SK-N-SH (cell line): ENCODE measurements at regions of chr1 and their contacts with region 1.

Region 1: GRCh38 chr1:241985787-241986186 is 13.1 kb downstream of the MAP1LC3C start:
- DNase-seq: peak; percentile 55
- H3K4me3 ChIP-seq: no peak overlapping the region
- H3K27ac ChIP-seq: no peak overlapping the region
- H3K4me1 ChIP-seq: peaks cover 0 to 4% of the 10 kb centered on the region in 2 experiments; a peak in 1 of 4 replicates
- H3K27me3 ChIP-seq: no peaks in the 10 kb centered on the region
- CTCF ChIP-seq: peak; percentile 66
- EP300 ChIP-seq: no peak
- RAD21 ChIP-seq: peak; percentile 62

Region 2: GRCh38 chr1:241782396-241782795 is 203.4 kb before region 1 on chr1:
- CTCF ChIA-PET with region 1: no interaction called
- POLR2A ChIA-PET with region 1: no interaction called
- DNase-seq: no peak
- H3K4me3 ChIP-seq: no peak overlapping the region
- H3K27ac ChIP-seq: no peak overlapping the region
- H3K4me1 ChIP-seq: no peaks in the 10 kb centered on the region
- H3K27me3 ChIP-seq: no peaks in the 10 kb centered on the region
- CTCF ChIP-seq: no peak
- EP300 ChIP-seq: no peak
- RAD21 ChIP-seq: no peak

Region 3: GRCh38 chr1:241870290-241870689 is 115.5 kb before region 1 on chr1:
- CTCF ChIA-PET with region 1: no interaction called
- POLR2A ChIA-PET with region 1: no interaction called
- DNase-seq: no peak
- H3K4me3 ChIP-seq: no peak overlapping the region
- H3K27ac ChIP-seq: no peak overlapping the region
- H3K4me1 ChIP-seq: no peaks in the 10 kb centered on the region; a peak in 1 of 4 replicates
- H3K27me3 ChIP-seq: no peaks in the 10 kb centered on the region
- CTCF ChIP-seq: no peak
- EP300 ChIP-seq: no peak
- RAD21 ChIP-seq: no peak

Region 4: DNA sequence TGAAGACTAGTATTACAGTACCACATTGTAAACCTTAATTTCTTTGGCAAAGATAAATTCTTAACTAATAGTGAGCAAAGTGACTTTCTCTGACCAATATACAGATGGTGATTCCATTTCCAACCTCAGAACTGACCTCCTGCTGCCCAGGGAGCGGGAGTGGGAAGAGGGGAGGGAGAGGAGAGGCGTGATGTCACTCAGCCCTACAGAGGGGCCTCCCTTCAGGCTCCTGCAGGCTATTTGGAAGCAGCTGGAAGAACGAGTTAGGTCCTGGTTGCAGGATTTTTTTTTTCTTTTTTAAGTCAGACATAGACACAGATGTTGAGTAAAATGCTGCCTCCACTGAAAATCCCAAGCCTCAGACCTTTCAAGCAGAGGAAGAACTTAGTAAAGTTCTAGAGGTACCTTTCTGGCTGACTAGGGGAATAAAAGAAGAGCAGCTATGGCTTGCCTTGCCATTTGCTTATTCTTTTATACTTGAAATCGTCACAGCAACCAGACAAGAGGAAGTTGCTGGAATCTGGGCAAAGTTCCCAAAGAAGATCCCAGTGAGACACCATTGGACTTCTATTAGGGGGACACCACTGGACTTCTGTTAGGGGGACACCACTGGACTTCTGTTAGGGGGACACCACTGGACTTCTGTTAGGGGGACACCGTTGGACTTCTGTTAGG is 83.3 kb before region 1 on chr1:
- CTCF ChIA-PET with region 1: interaction called, 53 read pairs
- POLR2A ChIA-PET with region 1: no interaction called
- DNase-seq: no peak
- H3K4me3 ChIP-seq: no peak overlapping the region
- H3K27ac ChIP-seq: no peak overlapping the region
- H3K4me1 ChIP-seq: no peaks in the 10 kb centered on the region; a peak in 1 of 4 replicates
- H3K27me3 ChIP-seq: no peaks in the 10 kb centered on the region
- CTCF ChIP-seq: no peak
- EP300 ChIP-seq: no peak
- RAD21 ChIP-seq: no peak

Region 5: DNA sequence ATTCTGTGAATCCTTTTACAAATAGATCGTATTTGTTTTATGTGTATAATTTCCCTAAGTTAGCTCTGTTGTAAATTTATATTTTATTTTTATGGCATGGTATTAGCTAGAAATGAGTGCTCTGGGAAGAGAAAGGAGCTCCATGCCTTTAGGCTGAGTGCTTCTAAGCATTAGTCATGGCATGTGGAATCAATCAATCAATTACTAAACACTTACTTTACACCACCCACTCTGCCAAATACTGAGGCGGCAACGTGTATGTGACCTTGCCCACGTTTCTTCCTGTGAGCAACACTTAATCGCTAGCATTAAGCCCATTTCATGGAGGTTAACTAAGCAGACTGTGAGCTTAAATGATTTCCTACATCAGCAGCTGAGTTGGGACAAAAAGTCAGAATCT is 35.4 kb before region 1 on chr1:
- CTCF ChIA-PET with region 1: no interaction called
- POLR2A ChIA-PET with region 1: no interaction called
- DNase-seq: peak; percentile 66
- H3K4me3 ChIP-seq: no peak overlapping the region
- H3K27ac ChIP-seq: peak overlapping the region; percentile 0 to 64; a peak in 1 of 4 replicates
- H3K4me1 ChIP-seq: peaks cover 0 to 2% of the 10 kb centered on the region in 2 experiments; a peak in 1 of 4 replicates
- H3K27me3 ChIP-seq: no peaks in the 10 kb centered on the region
- CTCF ChIP-seq: no peak
- EP300 ChIP-seq: peak; percentile 8 to 54; a peak in 2 of 4 replicates
- RAD21 ChIP-seq: no peak

Region 6: DNA sequence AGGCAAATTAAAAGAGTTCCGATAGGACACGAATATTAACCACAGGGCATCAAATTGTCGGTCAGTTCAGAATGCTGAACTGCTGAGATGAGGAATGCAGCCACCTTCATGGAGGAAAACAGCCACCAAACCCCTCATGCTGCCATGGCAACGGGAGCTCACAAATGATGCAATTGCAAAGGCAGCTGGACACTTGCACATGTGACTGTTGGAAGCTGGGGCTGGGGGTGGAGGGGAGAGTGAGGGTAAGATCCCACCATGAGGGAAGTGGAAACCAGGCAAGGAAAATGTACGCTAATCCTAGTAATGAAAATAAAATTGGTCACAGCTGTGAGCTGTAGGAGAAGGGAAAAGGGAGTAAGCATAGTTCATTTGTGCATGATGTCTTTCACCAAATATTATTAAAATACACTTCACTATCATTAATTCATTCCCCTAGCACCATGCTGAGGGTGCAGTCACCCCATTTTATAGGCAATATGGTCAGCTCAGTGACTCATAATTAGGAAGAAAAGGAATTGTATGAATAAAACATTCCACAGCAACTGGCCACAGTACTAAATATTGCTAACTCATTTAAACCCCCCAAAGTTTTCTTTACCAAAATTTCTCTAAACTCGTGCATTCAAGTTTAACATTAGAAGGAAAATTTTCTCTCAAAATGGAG is 13.0 kb before region 1 on chr1:
- CTCF ChIA-PET with region 1: interaction called, 20 read pairs
- POLR2A ChIA-PET with region 1: no interaction called
- DNase-seq: peak; percentile 64
- H3K4me3 ChIP-seq: no peak overlapping the region
- H3K27ac ChIP-seq: no peak overlapping the region
- H3K4me1 ChIP-seq: peaks cover 5% of the 10 kb centered on the region in 2 experiments; a peak in 1 of 4 replicates
- H3K27me3 ChIP-seq: no peaks in the 10 kb centered on the region
- CTCF ChIP-seq: no peak
- EP300 ChIP-seq: no peak
- RAD21 ChIP-seq: no peak

Region 7: GRCh38 chr1:241998412-241998921 is 12.7 kb after region 1 on chr1:
- CTCF ChIA-PET with region 1: interaction called, 12 read pairs
- POLR2A ChIA-PET with region 1: no interaction called
- DNase-seq: no peak
- H3K4me3 ChIP-seq: peak overlapping the region in 1 of 2 experiments; percentile 44; a peak in 1 of 4 replicates
- H3K27ac ChIP-seq: no peak overlapping the region
- H3K4me1 ChIP-seq: peaks cover 0 to 4% of the 10 kb centered on the region in 2 experiments; a peak in 1 of 4 replicates
- H3K27me3 ChIP-seq: no peaks in the 10 kb centered on the region
- CTCF ChIP-seq: peak; percentile 47
- EP300 ChIP-seq: no peak
- RAD21 ChIP-seq: no peak

Region 8: DNA sequence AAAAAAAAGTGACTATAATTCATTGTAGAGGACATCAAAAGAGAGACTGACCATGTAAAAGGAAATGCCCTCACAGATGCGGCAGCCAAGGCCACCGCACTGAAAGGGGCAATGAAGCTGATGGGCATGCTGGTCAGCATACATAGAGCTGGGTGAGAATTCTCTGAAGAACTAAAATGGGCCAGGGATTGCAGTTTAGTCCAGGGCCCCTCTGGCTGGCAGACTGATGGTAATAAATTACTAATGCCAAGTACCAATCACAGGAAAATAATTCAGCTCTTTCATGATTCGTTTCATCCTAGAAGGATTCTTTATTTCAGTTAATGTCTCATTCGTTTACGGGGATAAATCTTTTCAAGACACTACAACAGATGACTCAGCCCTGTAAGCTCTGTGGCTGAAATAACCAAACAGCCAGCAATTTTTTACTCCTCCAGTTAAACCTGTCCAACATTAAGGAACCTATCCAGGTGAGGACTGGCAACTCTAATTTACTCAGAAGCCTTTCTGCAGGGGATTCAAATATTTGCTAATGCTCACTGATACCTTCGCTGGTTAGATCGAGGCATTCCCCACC is 70.0 kb after region 1 on chr1:
- CTCF ChIA-PET with region 1: no interaction called
- POLR2A ChIA-PET with region 1: no interaction called
- DNase-seq: no peak
- H3K4me3 ChIP-seq: no peak overlapping the region
- H3K27ac ChIP-seq: no peak overlapping the region
- H3K4me1 ChIP-seq: no peaks in the 10 kb centered on the region
- H3K27me3 ChIP-seq: no peaks in the 10 kb centered on the region
- CTCF ChIP-seq: no peak
- EP300 ChIP-seq: no peak
- RAD21 ChIP-seq: no peak